Caco-2 (cell line): ENCODE measurements at regions of chr2 and their contacts with region 1.

Region 1: GRCh38 chr2:37537316-37537715 is 134.1 kb downstream of the CDC42EP3 start:
- DNase-seq: no peak
- H3K4me3 ChIP-seq: no peak overlapping the region
- H3K4me3 Mint-ChIP-seq: no peak overlapping the region
- H3K27ac Mint-ChIP-seq: no peak overlapping the region
- H3K4me1 ChIP-seq: no peaks in the 10 kb centered on the region
- H3K4me1 Mint-ChIP-seq: peaks cover 10% of the 10 kb centered on the region
- H3K27me3 ChIP-seq: no peaks in the 10 kb centered on the region
- H3K27me3 Mint-ChIP-seq: no peaks in the 10 kb centered on the region
- CTCF ChIP-seq: no peak

Region 2: DNA sequence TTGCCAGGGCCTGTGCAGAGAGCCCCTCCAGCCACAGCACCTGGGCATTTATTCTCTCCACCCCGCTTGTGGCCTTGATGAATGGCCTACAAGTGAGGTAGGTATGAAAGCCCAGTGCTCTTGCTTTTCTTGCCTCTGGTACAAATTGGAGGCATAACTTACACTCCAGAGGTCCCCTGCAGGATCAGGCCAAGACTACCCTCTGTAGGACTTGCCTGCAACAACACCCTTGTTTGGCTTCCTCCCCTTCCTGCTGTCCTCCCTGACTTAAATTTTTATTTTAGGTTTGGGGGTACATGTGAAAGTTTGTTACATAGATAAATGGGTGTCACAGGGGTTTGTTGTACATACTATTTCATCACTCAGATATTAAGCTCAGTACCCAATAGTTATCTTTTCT is 38.5 kb after region 1 on chr2:
- CTCF ChIA-PET with region 1: no interaction called
- POLR2A ChIA-PET with region 1: no interaction called
- intact Hi-C with region 1: no loop called
- DNase-seq: no peak
- H3K4me3 ChIP-seq: no peak overlapping the region
- H3K4me3 Mint-ChIP-seq: no peak overlapping the region
- H3K27ac Mint-ChIP-seq: no peak overlapping the region
- H3K4me1 ChIP-seq: peaks cover 17% of the 10 kb centered on the region
- H3K4me1 Mint-ChIP-seq: peaks cover 29% of the 10 kb centered on the region
- H3K27me3 ChIP-seq: no peaks in the 10 kb centered on the region
- H3K27me3 Mint-ChIP-seq: no peaks in the 10 kb centered on the region
- CTCF ChIP-seq: no peak

Region 3: DNA sequence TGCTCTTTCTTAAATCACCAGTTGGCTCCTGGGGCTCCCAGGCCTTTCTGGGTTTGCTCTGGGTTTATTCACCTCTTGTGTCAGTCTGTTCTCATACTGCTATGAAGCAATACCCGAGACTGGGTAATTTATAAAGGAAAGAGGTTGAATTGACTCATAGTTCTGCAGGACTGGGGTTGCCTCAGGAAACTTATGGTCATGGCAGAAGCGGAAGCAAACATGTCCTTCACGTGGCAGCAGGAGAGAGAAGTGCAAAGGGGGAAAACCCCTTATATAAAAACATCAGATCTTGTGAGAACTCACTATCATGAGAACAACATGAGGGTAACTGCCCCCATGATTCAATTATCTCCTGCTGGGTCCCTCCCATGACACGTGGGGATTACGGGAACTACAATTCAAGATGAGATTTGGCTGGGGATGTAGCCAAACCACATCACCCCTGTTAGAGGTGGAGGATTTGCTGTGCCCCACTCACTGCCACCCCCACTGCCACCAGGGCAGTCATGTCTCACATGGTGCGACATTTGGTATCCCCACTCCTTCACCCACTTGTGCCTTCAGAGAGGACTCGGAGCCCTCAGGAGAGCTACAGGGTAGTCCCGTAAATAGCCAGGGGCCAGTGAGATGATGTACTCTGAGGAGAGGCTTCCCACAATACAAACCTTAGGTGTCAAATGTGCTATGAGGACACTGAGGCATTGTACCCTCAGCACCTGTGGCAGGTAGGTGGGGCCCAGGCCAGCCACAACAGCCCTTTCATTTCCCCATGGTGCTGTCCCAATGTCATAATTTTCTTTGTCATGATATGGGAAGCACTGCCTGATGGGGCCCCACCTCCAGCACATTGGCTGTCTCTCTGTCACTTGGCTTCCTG is 98.4 kb after region 1 on chr2:
- CTCF ChIA-PET with region 1: no interaction called
- POLR2A ChIA-PET with region 1: no interaction called
- intact Hi-C with region 1: loop called (anchors 5 kb)
- DNase-seq: no peak
- H3K4me3 ChIP-seq: no peak overlapping the region
- H3K4me3 Mint-ChIP-seq: no peak overlapping the region
- H3K27ac Mint-ChIP-seq: peak overlapping the region; percentile 5
- H3K4me1 ChIP-seq: no peaks in the 10 kb centered on the region
- H3K4me1 Mint-ChIP-seq: peaks cover 12% of the 10 kb centered on the region
- H3K27me3 ChIP-seq: no peaks in the 10 kb centered on the region
- H3K27me3 Mint-ChIP-seq: no peaks in the 10 kb centered on the region
- CTCF ChIP-seq: no peak